CD8-positive, alpha-beta memory T cell (primary cell): ENCODE measurements at regions of chr22 and their contacts with region 1.

Region 1: GRCh38 chr22:46250035-46250782 is at the start of gene CDPF1:
- DNase-seq: peak; percentile 84 to 90 (median 88)
- H3K4me3 ChIP-seq: peak within 1 kb of the TSS; percentile 66
- H3K4me3 Mint-ChIP-seq: peak within 1 kb of the TSS; percentile 76 to 89 (median 83)
- H3K27ac ChIP-seq: peak within 1 kb of the TSS; percentile 67
- H3K27ac Mint-ChIP-seq: peak within 1 kb of the TSS; percentile 53 to 92 (median 80)
- H3K4me1 ChIP-seq: peaks cover 17% of the 10 kb centered on the region
- H3K4me1 Mint-ChIP-seq: peaks cover 22 to 39% (median 24%) of the 10 kb centered on the region in 3 donors
- H3K27me3 ChIP-seq: no peaks in the 10 kb centered on the region
- H3K27me3 Mint-ChIP-seq: no peaks in the 10 kb centered on the region
- total RNA-seq, gene CDPF1: 8.6 to 10.0 TPM

Region 2: DNA sequence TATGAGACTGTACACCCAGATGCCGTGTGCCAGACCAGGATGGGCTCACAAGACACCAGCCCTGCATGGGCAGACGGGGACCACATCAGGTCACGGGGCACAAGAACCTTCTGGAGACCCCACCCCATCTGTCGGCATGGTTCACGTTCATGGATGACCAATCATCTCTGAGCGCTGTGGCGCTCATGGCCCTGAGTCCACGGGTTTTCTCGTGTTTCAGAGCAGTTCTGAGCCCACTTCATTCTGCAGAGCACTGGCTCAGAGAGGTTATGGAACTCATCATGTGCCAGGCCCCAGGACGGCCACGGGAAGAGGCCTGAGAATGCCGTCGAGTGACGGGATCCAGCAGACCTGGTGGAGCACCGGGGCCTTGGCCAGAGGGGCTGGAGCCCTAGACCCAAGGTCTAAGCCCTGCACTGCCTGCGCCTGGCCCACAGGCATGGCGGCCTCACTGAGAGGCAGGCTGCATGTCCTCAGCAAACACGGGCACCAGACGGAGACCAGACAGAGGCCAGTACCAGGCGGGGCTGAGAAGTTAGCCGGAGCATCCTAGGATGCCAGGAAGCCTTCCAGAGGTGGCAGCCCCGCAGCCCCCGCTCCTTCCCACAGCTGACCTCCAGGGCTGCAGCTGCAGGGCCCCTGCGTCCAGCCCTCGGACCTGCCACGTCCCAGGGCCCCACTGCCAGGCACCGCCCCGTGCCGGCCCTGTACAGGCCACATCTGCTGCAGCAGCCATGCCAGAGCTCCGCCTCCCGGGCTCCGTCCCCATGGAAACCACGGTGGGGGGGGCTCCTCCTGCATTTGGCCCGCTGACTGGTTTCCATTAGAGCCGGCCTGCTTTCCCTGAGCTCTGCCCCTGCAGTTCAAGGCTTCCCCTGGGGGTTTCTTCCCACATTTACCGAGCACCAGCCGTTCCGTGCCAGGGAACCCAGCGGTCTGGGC is 162.6 kb before region 1 on chr22:
- CTCF ChIA-PET with region 1: no interaction called
- POLR2A ChIA-PET with region 1: no interaction called
- DNase-seq: no peak
- H3K4me3 ChIP-seq: no peak overlapping the region
- H3K4me3 Mint-ChIP-seq: no peak overlapping the region
- H3K27ac ChIP-seq: no peak overlapping the region
- H3K27ac Mint-ChIP-seq: no peak overlapping the region
- H3K4me1 ChIP-seq: no peaks in the 10 kb centered on the region
- H3K4me1 Mint-ChIP-seq: peaks cover 0 to 9% (median 0%) of the 10 kb centered on the region in 3 donors
- H3K27me3 ChIP-seq: no peaks in the 10 kb centered on the region
- H3K27me3 Mint-ChIP-seq: no peaks in the 10 kb centered on the region

Region 3: DNA sequence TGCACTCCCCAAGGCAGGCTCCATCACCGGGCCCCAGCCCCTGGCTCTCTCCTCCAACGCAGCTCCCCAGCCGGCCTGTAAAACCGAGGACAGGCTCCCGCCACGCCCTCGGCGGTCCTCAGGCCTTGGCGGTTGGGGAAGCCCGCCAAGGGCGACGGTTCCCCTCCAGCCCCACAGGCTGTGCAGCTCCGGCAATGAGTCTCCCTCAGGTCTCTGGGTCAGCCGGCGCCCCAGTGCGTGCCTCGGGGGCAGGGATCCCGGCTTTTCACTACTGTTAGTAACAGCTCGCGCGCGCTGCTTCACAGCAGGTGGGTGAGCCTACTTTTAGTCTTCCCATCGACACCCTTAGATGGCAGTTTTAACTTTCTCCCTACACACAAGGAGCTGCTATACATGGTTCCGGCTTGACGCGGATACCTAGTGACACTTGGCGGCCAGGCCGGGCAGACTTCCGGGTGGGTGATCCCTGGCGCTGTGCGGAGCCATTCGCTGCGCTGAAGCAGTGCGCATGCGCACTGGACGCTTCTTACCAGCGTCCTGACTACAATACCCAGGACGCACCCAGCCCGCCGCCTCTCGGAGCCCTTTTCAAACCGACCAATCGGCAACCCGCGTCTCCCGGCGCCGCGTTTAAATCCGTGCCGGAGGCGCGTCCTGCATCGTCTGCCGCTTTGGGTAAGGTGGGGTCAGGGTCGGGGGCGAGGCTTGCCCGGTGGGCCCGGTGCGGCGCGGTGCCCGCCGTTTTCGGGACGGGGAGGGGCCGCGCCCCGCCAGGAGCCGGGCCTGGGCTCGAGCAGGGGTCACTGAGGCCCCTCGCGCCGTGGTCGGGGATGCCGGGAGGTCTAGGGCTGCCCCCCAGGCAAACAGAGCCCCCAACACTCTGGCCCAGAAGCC is 46.3 kb after region 1 on chr22 and contains the start of gene GTSE1:
- CTCF ChIA-PET with region 1: interaction called, 12 read pairs
- POLR2A ChIA-PET with region 1: interaction called, 12 read pairs
- DNase-seq: peak; percentile 95 to 99 (median 96)
- H3K4me3 ChIP-seq: peak within 1 kb of the TSS; percentile 85
- H3K4me3 Mint-ChIP-seq: peak within 1 kb of the TSS; percentile 83 to 97 (median 88)
- H3K27ac ChIP-seq: peak within 1 kb of the TSS; percentile 90
- H3K27ac Mint-ChIP-seq: peak within 1 kb of the TSS; percentile 88 to 100 (median 96)
- H3K4me1 ChIP-seq: peaks cover 20% of the 10 kb centered on the region
- H3K4me1 Mint-ChIP-seq: peaks cover 23 to 30% (median 29%) of the 10 kb centered on the region in 3 donors
- H3K27me3 ChIP-seq: no peaks in the 10 kb centered on the region
- H3K27me3 Mint-ChIP-seq: peaks cover 0 to 4% of the 10 kb centered on the region in 2 donors
- total RNA-seq, gene GTSE1: 27.4 to 30.9 TPM

Region 4: GRCh38 chr22:46309526-46310085 is 59.4 kb after region 1 on chr22:
- CTCF ChIA-PET with region 1: no interaction called
- POLR2A ChIA-PET with region 1: no interaction called
- DNase-seq: peak in 1 of 5 donors; percentile 8
- H3K4me3 ChIP-seq: no peak overlapping the region
- H3K4me3 Mint-ChIP-seq: no peak overlapping the region
- H3K27ac ChIP-seq: no peak overlapping the region
- H3K27ac Mint-ChIP-seq: no peak overlapping the region
- H3K4me1 ChIP-seq: no peaks in the 10 kb centered on the region
- H3K4me1 Mint-ChIP-seq: no peaks in the 10 kb centered on the region
- H3K27me3 ChIP-seq: no peaks in the 10 kb centered on the region
- H3K27me3 Mint-ChIP-seq: peaks cover 0 to 4% of the 10 kb centered on the region in 2 donors

Region 5: GRCh38 chr22:46366801-46367706 is 116.8 kb after region 1 on chr22:
- CTCF ChIA-PET with region 1: no interaction called
- POLR2A ChIA-PET with region 1: no interaction called
- DNase-seq: peak in 1 of 5 donors; percentile 52
- H3K4me3 ChIP-seq: no peak overlapping the region
- H3K4me3 Mint-ChIP-seq: peak overlapping the region in 6 of 7 donors; percentile 11 to 83 (median 60)
- H3K27ac ChIP-seq: no peak overlapping the region
- H3K27ac Mint-ChIP-seq: peak overlapping the region in 3 of 8 donors; percentile 53 to 90 (median 81)
- H3K4me1 ChIP-seq: peaks cover 26% of the 10 kb centered on the region
- H3K4me1 Mint-ChIP-seq: peaks cover 28 to 37% (median 32%) of the 10 kb centered on the region in 3 donors
- H3K27me3 ChIP-seq: no peaks in the 10 kb centered on the region
- H3K27me3 Mint-ChIP-seq: peaks cover 0 to 10% of the 10 kb centered on the region in 2 donors

Region 6: DNA sequence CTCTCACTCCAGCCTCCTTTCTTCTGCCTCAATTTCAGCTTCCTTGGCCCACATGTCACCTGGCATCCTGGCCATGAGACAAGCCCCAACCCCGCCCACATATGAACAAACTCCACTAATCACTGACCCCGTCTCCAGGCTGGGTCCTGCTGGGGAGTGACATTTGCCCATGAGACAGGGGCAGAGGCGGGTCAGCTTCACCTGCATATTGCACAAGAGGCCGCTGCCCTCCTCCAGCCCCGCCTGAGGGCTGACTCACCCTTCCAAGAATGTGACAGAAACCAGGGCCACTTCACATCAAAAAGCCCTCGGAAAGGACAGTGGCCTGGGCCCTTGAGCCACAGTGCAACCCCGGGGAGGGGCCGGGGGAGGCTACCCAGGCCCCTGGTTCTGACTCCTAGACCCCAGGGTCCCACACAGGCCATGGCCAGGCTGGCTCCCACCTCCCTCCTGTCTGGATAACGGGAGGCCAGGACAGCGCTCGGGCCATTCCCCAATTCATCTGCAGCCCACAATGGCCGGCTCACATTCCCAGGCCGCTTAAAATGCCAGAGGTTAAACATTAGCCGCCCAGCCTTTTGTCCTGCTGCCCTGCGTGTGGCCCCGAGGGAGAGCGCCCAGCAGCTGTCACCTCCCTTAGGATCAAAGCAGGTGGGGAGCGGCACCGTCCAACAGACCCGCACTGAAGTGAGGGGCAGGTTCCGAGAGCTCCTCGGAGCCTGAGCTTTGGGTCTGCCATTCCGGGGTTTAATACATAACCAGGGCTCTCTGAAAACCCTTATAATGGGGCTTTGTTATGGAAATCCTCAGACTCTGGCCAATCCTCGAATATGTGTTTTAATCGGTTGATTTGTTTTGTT is 127.6 kb after region 1 on chr22:
- CTCF ChIA-PET with region 1: no interaction called
- POLR2A ChIA-PET with region 1: no interaction called
- DNase-seq: no peak
- H3K4me3 ChIP-seq: no peak overlapping the region
- H3K4me3 Mint-ChIP-seq: peak overlapping the region in 1 of 7 donors; percentile 13
- H3K27ac ChIP-seq: no peak overlapping the region
- H3K27ac Mint-ChIP-seq: peak overlapping the region in 1 of 8 donors; percentile 22
- H3K4me1 ChIP-seq: peaks cover 15% of the 10 kb centered on the region
- H3K4me1 Mint-ChIP-seq: peaks cover 19 to 22% (median 21%) of the 10 kb centered on the region in 3 donors
- H3K27me3 ChIP-seq: no peaks in the 10 kb centered on the region
- H3K27me3 Mint-ChIP-seq: peaks cover 0 to 1% of the 10 kb centered on the region in 2 donors